CD4-positive, alpha-beta T cell (primary cell): ENCODE measurements at regions of chr16 and their contacts with region 1.

Region 1: DNA sequence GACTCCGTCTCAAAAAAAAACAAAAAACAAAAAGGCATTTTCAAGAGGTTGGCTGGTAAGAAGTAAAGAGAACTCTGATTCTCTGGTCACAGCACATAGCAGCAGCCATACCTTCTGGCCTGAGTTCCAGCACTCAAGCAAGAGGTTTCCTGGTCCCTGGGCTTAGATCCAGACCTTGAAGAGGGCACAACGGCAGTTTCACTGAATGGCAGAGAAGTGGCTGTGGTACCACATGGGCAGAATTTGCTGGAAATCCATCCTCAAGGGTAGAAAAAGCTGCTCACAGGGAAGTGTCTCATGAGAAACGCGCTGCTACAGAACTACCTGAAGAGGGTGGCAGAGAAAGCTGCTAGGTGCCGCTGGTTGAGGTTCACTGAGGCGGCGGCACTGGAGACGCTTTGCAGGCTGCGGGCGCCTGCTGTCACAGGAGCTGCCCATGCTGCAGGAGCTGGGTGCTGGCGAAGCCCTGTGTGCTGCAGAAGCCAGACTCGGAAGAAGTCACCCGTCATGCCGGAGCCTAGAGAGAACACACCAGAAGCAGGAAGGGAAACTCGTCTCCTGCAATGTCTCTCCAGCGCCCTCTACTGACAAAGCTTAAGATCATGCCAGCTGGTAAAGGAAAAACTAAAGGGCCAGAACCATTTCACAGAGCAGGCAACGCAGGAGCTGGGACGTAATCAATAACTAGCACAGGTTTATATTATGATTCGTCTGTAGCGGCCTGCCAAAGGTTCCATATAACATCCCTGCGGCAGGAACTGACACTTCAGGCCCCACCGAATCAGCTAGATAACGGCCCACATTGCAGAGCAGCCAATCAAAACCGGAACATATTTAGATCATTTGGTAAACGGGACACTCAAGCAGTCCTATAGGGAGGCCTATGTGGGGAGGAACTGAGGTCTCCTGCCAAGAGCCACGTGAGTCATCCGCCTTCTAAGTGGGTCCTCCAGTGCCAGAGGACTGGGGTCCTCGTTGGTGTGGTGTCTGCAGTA is 5.4 kb upstream of the ZNF213 start:
- DNase-seq: peak; percentile 62 to 95 (median 74)
- ATAC-seq: peak; percentile 79
- H3K4me3 ChIP-seq: peak overlapping the region; percentile 75
- H3K4me3 Mint-ChIP-seq: peak overlapping the region; percentile 91
- H3K27ac ChIP-seq: peak overlapping the region; percentile 35 to 38
- H3K27ac Mint-ChIP-seq: peak overlapping the region; percentile 84
- H3K4me1 ChIP-seq: peaks cover 53% of the 10 kb centered on the region
- H3K4me1 Mint-ChIP-seq: peaks cover 63% of the 10 kb centered on the region
- H3K27me3 ChIP-seq: no peaks in the 10 kb centered on the region
- H3K27me3 Mint-ChIP-seq: no peaks in the 10 kb centered on the region
- CTCF ChIP-seq: peak; percentile 93

Region 2: GRCh38 chr16:3012828-3013420 is 116.5 kb before region 1 on chr16 and contains the start of gene CLDN9:
- CTCF ChIA-PET with region 1: no interaction called
- POLR2A ChIA-PET with region 1: no interaction called
- intact Hi-C with region 1: no loop called
- DNase-seq: peak in 2 of 14 experiments; percentile 15 to 25
- ATAC-seq: peak; percentile 68
- H3K4me3 ChIP-seq: no peak within 1 kb of the TSS
- H3K4me3 Mint-ChIP-seq: no peak within 1 kb of the TSS
- H3K27ac ChIP-seq: no peak within 1 kb of the TSS
- H3K27ac Mint-ChIP-seq: no peak within 1 kb of the TSS
- H3K4me1 ChIP-seq: peaks cover 35% of the 10 kb centered on the region
- H3K4me1 Mint-ChIP-seq: peaks cover 10% of the 10 kb centered on the region
- H3K27me3 ChIP-seq: peaks cover 10 to 11% of the 10 kb centered on the region in 2 experiments
- H3K27me3 Mint-ChIP-seq: peaks cover 22% of the 10 kb centered on the region
- CTCF ChIP-seq: no peak
- total RNA-seq, gene CLDN9: not detected

Region 3: DNA sequence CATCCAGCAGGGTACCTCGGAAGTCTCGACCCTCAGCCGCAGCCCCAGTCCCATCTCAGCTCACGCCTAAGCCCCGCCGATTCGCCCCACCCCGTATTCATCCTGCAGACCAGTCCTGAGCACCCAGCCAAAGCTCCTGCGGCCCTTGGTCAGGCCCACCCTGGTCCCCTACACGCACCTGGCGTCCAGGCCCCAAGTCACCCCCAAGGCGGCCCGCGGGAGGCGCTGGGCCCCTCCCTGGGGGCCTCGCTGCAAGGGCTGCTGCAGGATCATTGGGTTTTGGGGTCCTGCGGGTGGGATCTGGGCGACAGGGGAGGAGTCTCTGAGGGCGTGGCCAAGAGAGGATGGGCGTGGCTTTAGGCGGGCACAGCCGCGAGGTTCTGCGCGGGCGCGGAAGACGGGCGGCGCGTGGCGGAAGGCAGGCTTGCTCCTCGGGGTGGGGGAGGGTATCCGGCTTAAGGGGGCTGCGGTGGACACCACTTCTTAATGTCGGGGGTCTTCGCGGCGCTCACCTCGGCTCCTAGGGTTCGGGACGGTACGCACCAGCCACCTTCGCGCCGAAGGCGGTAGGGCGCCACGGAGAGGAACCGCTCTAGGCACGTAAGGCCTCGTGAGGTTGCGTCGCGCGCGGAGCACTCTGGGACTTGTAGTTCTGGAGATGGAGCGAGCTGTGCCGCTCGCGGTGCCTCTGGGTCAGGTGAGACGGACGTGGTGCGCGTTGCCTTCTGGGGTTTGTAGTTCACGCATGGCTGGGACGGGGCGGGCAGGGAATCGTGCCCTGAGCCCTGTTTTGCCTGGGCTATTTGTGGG is 105.6 kb before region 1 on chr16 and contains the starts of genes HCFC1R1 and THOC6:
- CTCF ChIA-PET with region 1: interaction called, 20 read pairs
- POLR2A ChIA-PET with region 1: interaction called, 8 read pairs
- intact Hi-C with region 1: no loop called
- DNase-seq: peak; percentile 90 to 99 (median 95)
- ATAC-seq: peak; percentile 76
- H3K4me3 ChIP-seq: peak within 1 kb of the TSS; percentile 78
- H3K4me3 Mint-ChIP-seq: peak within 1 kb of the TSS; percentile 66
- H3K27ac ChIP-seq: peak within 1 kb of the TSS; percentile 80 to 96
- H3K27ac Mint-ChIP-seq: peak within 1 kb of the TSS; percentile 78
- H3K4me1 ChIP-seq: peaks cover 77% of the 10 kb centered on the region
- H3K4me1 Mint-ChIP-seq: peaks cover 51% of the 10 kb centered on the region
- H3K27me3 ChIP-seq: peaks cover 0 to 4% of the 10 kb centered on the region in 2 experiments
- H3K27me3 Mint-ChIP-seq: peaks cover 1% of the 10 kb centered on the region
- CTCF ChIP-seq: no peak
- total RNA-seq, gene HCFC1R1: 8.9 to 11.0 TPM
- total RNA-seq, gene THOC6: 12.0 to 12.9 TPM

Region 4: DNA sequence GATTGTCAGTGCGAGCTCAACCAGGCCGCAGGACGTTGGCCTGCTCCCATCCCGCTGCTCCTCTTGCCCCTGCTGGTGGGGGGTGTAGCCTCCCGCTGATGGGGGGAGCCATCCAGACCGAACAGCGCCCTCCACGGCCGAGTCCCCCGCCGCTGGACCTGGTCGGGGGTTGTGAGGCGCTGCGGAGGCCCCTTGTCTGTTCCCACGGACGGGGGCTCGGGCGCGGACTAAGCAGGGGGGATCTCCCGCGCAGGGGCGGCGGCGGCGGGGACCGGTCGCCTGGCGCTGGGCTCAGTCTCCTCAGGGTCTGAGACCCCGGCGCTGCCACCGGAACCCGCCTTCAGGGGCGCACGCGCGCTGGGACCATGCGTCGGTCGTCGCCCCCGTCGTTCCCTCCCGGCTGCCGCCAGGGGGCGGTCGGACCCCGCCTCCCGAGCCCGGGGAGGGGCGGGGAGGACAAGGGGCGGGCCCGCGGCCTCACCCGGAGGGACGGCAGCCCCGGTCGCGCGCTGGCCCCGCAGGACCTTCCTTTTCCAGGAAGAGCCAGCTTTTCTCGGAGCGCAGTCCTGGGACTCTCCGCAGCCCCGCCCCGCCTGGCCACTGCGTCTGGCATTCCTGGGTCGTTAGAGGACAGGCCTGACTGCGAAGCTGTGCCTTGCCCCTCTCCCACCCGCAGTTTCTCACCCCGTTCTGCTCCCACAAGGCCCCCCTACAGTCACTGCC is 70.3 kb before region 1 on chr16:
- CTCF ChIA-PET with region 1: interaction called, 62 read pairs
- POLR2A ChIA-PET with region 1: interaction called, 70 read pairs
- intact Hi-C with region 1: loop called (anchors 1 kb)
- DNase-seq: peak; percentile 70 to 95 (median 86)
- ATAC-seq: peak; percentile 88
- H3K4me3 ChIP-seq: peak overlapping the region; percentile 87
- H3K4me3 Mint-ChIP-seq: peak overlapping the region; percentile 95
- H3K27ac ChIP-seq: peak overlapping the region; percentile 72 to 74
- H3K27ac Mint-ChIP-seq: peak overlapping the region; percentile 83
- H3K4me1 ChIP-seq: peaks cover 84% of the 10 kb centered on the region
- H3K4me1 Mint-ChIP-seq: peaks cover 60% of the 10 kb centered on the region
- H3K27me3 ChIP-seq: no peaks in the 10 kb centered on the region
- H3K27me3 Mint-ChIP-seq: no peaks in the 10 kb centered on the region
- CTCF ChIP-seq: peak; percentile 88

Region 5: GRCh38 chr16:3074860-3075522 is 54.4 kb before region 1 on chr16:
- CTCF ChIA-PET with region 1: interaction called, 24 read pairs
- POLR2A ChIA-PET with region 1: interaction called, 58 read pairs
- intact Hi-C with region 1: no loop called
- DNase-seq: peak; percentile 58 to 95 (median 82)
- ATAC-seq: peak; percentile 89
- H3K4me3 ChIP-seq: peak overlapping the region; percentile 34
- H3K4me3 Mint-ChIP-seq: peak overlapping the region; percentile 77
- H3K27ac ChIP-seq: peak overlapping the region; percentile 80 to 86
- H3K27ac Mint-ChIP-seq: peak overlapping the region; percentile 95
- H3K4me1 ChIP-seq: peaks cover 96% of the 10 kb centered on the region
- H3K4me1 Mint-ChIP-seq: peaks cover 93% of the 10 kb centered on the region
- H3K27me3 ChIP-seq: no peaks in the 10 kb centered on the region
- H3K27me3 Mint-ChIP-seq: no peaks in the 10 kb centered on the region
- CTCF ChIP-seq: no peak

Region 6: DNA sequence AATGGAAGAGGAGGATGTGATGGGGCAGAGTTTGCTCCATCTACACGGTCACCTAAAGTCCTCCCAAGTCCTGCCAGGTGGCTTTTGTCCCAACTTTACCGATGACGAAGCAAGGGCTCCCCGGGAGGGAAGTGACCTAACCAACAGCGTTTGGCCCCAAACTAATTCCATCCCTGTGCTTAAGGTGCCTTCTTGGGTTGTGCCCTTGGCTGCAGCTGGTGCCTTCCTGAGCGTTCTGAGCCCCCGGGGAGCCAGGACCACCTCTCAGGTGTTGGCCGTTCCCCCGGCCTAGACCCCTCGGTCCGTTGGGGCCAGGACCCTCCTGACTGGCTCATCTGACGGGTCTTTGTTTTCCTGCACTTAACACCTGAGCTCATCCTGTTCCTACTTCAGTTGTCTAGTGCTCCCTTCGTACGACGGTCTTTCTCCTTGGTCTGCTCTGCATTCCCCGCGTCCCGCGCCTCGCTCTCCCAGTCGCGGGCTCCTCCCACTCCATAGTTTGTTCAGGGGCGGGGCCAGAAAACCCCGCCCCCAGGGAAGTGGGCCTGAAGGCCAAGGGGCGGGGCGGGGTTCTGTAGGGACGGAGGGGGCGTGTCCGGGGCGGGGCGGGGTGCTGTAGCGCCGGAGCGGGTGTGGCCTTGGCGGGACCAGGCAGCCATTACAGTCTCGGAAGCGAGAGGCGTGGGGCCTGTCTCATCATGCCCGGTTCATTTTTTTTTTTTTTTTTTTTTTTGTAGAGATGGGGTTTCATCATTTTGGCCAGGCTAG is 29.5 kb before region 1 on chr16:
- CTCF ChIA-PET with region 1: interaction called, 30 read pairs
- POLR2A ChIA-PET with region 1: interaction called, 19 read pairs
- intact Hi-C with region 1: loop called (anchors 1 to 2 kb)
- DNase-seq: peak; percentile 78 to 97 (median 88)
- ATAC-seq: peak; percentile 82
- H3K4me3 ChIP-seq: peak overlapping the region; percentile 48
- H3K4me3 Mint-ChIP-seq: peak overlapping the region; percentile 82
- H3K27ac ChIP-seq: peak overlapping the region in 1 of 2 donors; percentile 18
- H3K27ac Mint-ChIP-seq: peak overlapping the region; percentile 68
- H3K4me1 ChIP-seq: peaks cover 49% of the 10 kb centered on the region
- H3K4me1 Mint-ChIP-seq: peaks cover 71% of the 10 kb centered on the region
- H3K27me3 ChIP-seq: no peaks in the 10 kb centered on the region
- H3K27me3 Mint-ChIP-seq: no peaks in the 10 kb centered on the region
- CTCF ChIP-seq: no peak

Region 7: DNA sequence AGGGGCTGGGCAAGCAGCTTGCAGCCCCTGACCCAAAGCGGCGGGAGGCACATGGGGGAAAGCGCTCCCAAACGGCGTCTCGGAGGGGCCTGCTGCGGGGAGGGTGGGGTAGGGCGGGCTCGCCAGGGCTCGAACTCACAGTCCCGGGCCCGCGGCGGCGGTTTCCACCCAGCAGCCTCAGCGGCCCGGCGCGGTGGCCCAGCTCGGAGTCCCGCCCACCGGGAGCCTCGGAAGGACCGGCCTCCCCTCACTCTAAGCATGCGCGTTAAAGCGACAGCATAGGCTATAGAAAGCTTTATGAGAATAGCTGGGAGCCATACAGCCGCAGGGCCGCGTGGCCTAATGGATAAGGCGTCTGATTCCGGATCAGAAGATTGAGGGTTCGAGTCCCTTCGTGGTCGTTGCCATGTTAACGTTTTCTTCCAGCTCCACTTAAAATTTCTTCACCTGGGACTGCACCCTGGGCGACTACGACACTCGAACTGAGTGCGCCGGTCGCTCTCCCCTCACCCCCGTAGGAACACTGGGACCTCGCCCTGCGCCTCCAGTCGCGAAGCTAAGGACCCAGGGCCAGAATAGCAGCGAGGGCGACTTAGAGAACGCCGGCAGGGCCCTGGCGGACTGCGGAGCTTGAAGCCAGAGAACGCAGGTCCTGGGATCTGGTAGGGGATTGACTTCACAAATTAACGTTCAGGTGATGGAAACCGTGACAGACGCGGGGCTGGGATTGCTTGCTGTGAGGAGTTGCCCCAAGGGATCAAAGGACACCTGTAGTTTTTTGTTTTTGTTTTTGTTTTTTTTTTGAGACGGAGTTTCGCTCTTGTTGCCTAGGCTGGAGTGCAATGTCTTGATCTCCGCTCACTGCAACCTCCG is 21.1 kb after region 1 on chr16:
- CTCF ChIA-PET with region 1: interaction called, 20 read pairs
- POLR2A ChIA-PET with region 1: interaction called, 77 read pairs
- intact Hi-C with region 1: loop called (anchors 1 to 2 kb)
- DNase-seq: peak; percentile 94 to 99 (median 98)
- ATAC-seq: peak; percentile 81
- H3K4me3 ChIP-seq: peak overlapping the region; percentile 70
- H3K4me3 Mint-ChIP-seq: peak overlapping the region; percentile 93
- H3K27ac ChIP-seq: peak overlapping the region in 1 of 2 donors; percentile 64
- H3K27ac Mint-ChIP-seq: peak overlapping the region; percentile 98
- H3K4me1 ChIP-seq: peaks cover 37% of the 10 kb centered on the region
- H3K4me1 Mint-ChIP-seq: peaks cover 31% of the 10 kb centered on the region
- H3K27me3 ChIP-seq: no peaks in the 10 kb centered on the region
- H3K27me3 Mint-ChIP-seq: peaks cover 22% of the 10 kb centered on the region
- CTCF ChIP-seq: no peak

Region 8: DNA sequence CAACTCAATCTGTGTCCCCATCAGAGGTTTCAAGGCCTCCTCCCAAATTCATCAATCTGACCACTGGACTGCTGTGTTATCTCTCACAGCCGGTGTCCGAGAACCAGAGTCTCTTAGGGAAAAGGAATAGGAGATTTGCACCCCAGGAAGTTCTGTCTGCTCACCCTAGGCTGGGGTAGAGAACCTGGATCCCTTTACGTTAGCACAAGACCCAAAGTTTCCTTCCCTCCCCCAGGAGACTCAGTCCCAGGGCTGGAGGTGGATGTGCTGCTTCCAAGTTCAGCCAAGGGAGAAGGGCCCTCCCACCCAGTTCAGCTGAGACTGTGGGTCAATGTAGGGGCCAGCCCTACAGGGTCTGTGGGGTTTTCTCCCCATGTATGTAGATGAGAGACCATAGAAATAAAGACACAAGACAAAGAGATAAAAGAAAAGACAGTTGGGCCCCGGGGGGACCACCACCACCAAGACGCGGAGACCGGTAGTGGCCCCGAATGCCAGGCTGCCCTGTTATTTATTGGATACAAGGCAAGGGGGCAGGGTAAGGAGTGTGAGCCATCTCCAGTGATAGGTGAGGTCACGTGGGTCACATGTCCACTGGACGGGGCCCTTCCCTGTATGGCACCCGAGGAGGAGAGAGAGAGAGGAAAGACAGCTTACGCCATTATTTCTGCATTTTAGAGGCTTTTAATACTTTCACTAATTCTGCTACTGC is 35.8 kb after region 1 on chr16:
- CTCF ChIA-PET with region 1: interaction called, 26 read pairs
- POLR2A ChIA-PET with region 1: interaction called, 6 read pairs
- intact Hi-C with region 1: loop called in 1 of 2 experiments (anchors 1 kb)
- DNase-seq: no peak
- ATAC-seq: no peak
- H3K4me3 ChIP-seq: peak overlapping the region; percentile 21
- H3K4me3 Mint-ChIP-seq: peak overlapping the region; percentile 74
- H3K27ac ChIP-seq: no peak overlapping the region
- H3K27ac Mint-ChIP-seq: peak overlapping the region; percentile 56
- H3K4me1 ChIP-seq: peaks cover 11% of the 10 kb centered on the region
- H3K4me1 Mint-ChIP-seq: peaks cover 11% of the 10 kb centered on the region
- H3K27me3 ChIP-seq: peaks cover 5 to 7% of the 10 kb centered on the region in 2 experiments
- H3K27me3 Mint-ChIP-seq: no peaks in the 10 kb centered on the region
- CTCF ChIP-seq: no peak